AG04449 (cell line): ENCODE measurements at regions of chr1 and their contacts with region 1.

Region 1: DNA sequence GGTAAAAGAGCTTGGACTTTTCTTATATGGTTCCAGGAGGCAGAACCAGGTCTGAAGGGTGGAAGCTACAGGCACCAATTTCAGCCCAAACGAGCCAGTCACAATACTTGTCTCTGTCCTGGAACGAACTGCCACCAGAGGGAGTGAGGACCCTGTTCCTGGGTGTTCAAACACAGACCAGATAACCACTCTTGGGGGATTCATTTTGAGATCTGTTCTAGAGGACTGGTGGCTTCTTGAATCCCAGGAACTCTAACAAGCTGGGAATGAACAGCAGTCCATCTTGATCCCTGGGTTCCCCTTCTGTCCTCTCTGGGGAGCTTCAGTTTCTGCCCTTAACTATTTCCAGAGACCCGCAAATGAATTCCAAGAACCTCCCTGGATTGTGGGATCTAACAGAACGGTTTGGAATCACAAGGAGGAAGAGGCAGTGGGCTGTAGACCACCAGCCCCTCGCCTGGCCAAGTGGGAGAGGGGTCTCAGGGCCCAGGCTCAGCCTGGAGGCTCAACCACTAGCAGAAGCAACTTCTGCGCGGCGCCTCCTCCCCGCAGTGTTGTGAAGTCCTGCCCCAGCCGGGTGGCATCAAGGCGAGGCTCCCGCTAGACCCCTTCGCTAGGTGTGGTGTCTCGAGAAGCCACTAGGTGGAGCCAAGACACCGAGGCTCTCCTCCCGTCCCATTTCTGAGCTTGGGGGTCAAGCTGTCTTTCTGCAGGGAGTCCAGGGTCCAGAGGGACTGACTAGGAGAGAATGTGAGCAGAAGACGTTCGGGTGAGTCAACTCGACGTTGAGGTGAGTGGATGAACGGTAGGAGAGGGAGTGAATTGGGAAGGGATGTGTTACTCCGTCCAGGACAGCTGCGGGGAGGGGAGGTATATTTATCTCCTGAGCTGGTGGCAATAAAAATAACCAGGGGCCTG is 12.1 kb upstream of the NES start:
- DNase-seq: no peak
- H3K4me3 ChIP-seq: peak overlapping the region; percentile 46
- CTCF ChIP-seq: peak; percentile 92

Region 2: GRCh38 chr1:156625436-156626078 is 63.7 kb before region 1 on chr1:
- CTCF ChIA-PET with region 1: interaction called, 341 read pairs
- POLR2A ChIA-PET with region 1: no interaction called
- DNase-seq: no peak
- H3K4me3 ChIP-seq: no peak overlapping the region
- CTCF ChIP-seq: peak; percentile 74

Region 3: GRCh38 chr1:156740679-156741612 is 51.7 kb after region 1 on chr1 and contains the start of gene MRPL24:
- CTCF ChIA-PET with region 1: interaction called, 2,951 read pairs
- POLR2A ChIA-PET with region 1: no interaction called
- DNase-seq: peak; percentile 96
- H3K4me3 ChIP-seq: peak within 1 kb of the TSS; percentile 93
- CTCF ChIP-seq: no peak

Region 4: DNA sequence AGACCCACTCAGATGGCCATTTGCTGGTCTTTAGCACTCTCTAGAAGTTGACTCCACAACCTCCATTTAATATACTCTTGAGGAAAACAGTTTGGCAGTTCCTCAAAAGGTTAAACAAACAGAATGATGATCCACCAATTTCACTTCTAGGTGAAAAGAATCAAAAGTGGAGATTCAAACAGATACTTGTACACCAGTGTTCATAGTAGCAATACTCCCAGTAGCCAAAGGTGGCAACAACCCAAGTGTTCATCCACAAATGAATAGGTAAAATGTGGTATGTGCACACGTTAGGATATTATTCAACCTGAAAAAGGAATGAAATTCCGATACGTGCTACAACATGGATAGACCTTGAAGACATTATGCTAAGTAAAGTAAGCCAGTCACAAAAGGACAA is 84.3 kb after region 1 on chr1:
- CTCF ChIA-PET with region 1: interaction called, 13 read pairs
- POLR2A ChIA-PET with region 1: no interaction called
- DNase-seq: no peak
- H3K4me3 ChIP-seq: no peak overlapping the region
- CTCF ChIP-seq: no peak

Region 5: DNA sequence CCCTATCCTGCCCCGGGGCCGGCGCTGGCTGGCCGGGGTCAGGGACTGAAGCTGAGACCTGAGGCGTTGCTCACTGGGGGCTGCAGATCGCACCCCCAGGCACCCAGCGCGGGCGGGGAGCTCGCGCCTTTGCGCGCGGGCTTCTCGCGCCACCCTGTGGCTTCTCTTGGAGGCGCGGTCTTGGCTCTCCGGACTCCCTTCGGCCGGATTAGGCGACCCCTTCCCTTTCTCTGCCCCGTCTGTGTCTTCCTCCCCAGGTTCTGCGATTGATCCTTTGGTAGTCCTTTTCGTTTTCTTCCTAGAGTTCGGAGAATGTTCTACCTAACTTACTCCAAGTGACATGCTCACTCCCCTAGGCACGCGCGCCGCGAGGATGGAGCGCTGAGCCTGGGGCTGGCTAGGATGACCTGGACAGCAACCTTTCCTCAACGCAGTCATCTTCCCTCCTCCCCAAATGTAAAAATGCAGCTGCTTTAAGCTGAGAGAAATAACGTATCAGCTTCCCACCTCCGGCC is 170.9 kb after region 1 on chr1:
- CTCF ChIA-PET with region 1: interaction called, 113 read pairs
- POLR2A ChIA-PET with region 1: no interaction called
- DNase-seq: no peak
- H3K4me3 ChIP-seq: peak overlapping the region; percentile 48
- CTCF ChIP-seq: peak; percentile 86

Region 6: GRCh38 chr1:156910309-156910782 is 221.1 kb after region 1 on chr1:
- CTCF ChIA-PET with region 1: interaction called, 10 read pairs
- POLR2A ChIA-PET with region 1: no interaction called
- DNase-seq: no peak
- H3K4me3 ChIP-seq: no peak overlapping the region
- CTCF ChIP-seq: peak; percentile 84

Region 7: DNA sequence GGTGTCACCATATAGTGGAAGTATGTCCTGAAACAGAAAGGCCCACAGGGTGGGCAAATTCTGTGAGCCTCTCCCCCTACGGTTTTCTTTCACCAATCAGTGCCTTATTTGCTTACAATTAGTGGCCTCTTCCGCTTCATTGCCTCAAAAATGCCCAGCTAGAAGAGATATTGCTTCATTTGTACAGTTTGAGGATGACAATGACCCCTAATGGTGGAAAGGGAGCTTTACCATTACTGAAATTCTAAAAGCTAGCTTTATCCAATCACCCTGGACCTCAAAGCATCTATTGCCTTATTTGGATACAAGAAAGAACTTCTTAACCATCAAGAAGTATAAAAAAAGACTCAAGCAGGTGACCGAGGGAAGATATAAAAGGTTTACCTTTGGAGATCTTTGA is 280.7 kb after region 1 on chr1:
- CTCF ChIA-PET with region 1: no interaction called
- POLR2A ChIA-PET with region 1: no interaction called
- DNase-seq: no peak
- H3K4me3 ChIP-seq: no peak overlapping the region
- CTCF ChIP-seq: peak; percentile 22